SK-N-SH (cell line): ENCODE measurements at regions of chr2 and their contacts with region 1.

Region 1: DNA sequence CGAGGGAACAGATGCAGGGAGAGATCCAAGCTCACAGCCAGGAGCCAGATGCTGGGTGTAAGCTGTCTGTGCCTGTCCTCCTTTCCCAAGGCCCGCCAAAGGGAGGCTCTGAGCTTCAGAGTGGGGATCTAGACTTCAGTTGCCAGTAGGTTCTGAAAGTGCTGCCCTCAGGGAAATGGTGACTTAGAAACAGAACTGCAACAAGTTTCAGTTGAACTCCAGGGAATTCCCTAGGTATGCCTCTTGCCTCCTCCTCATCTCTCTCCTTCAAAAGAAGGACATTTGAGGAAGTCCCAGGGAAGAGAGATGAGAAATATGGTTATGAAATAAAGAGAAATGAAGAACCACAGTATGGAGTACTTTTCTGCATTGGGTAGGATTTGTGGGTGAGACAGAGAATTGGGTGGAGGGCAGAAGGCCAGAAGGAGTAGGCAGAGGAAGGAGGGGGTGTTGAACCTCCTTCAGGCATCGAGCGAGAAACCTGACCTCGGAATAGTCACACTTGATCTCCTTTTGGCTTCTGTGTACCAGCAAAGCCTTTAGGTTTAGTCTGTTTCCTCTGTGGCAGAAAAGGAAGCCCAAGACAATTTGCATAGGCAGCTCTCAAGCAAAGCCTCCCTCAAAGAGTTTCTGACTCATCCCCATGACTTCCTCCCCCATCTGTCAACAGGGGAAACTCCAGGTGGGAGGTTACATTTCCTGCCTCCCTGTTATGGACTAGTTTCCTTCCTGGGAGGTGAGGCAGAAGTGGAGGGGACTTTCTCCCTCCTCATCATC is 45.7 kb downstream of the QPCT start:
- DNase-seq: no peak
- H3K4me3 ChIP-seq: no peak overlapping the region
- H3K27ac ChIP-seq: peak overlapping the region in 1 of 2 experiments; percentile 68; a peak in 2 of 4 replicates
- H3K4me1 ChIP-seq: peaks cover 6 to 32% of the 10 kb centered on the region in 2 experiments; a peak in 3 of 4 replicates
- H3K27me3 ChIP-seq: no peaks in the 10 kb centered on the region
- CTCF ChIP-seq: no peak
- EP300 ChIP-seq: peak in 1 of 2 experiments; percentile 62; a peak in 1 of 4 replicates
- RAD21 ChIP-seq: no peak

Region 2: DNA sequence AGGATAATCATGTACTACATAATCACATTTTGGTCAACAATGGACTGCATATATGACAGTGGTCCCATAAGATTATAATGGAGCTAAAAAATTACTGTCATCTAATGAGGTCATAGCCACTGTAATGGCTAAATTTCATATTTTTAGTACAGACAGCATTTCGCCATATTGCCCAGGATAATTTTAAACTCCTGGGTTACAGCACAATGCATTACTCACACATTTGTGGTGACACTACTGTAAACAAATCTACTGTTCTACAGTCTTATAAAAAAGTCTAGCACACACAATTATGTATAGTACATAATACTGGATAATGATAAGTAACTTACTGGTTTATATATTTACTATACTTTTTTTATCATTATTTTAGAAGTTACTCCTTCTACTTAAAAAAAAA is 246.2 kb before region 1 on chr2:
- CTCF ChIA-PET with region 1: no interaction called
- POLR2A ChIA-PET with region 1: no interaction called
- DNase-seq: no peak
- H3K4me3 ChIP-seq: no peak overlapping the region
- H3K27ac ChIP-seq: no peak overlapping the region
- H3K4me1 ChIP-seq: no peaks in the 10 kb centered on the region
- H3K27me3 ChIP-seq: no peaks in the 10 kb centered on the region
- CTCF ChIP-seq: no peak
- EP300 ChIP-seq: no peak
- RAD21 ChIP-seq: no peak

Region 3: DNA sequence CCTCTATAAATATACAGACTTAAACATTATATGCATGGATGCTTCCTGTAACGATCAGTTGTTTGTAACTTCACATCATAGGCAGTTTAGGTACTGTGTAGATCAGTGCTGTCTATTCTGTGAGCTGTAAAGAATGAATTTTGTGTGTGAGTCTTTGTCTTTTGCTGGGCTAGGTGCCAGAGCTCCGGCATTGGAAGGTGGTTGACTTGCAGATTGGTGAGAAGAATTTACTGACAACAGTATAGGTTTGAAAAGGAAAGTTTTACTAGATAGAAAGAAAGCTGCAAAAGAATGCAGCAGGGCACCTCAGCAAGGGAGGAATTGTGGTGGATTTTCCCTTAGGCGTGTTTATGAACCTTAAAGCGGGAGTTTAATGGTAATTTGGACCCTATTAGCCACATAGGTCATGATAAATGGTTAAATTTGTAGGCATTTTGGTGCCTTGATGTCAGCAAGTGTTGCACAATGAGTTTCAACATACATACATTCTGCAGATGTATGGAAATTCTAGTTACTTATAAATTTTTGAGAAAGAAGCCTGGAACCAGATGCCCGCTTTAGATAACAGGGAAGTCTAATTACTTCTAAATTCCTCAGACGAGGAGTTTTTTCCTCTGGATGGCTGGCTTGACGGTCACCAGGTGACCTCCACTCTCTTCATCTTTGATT is 52.4 kb before region 1 on chr2:
- CTCF ChIA-PET with region 1: interaction called, 16 read pairs
- POLR2A ChIA-PET with region 1: no interaction called
- DNase-seq: no peak
- H3K4me3 ChIP-seq: no peak overlapping the region
- H3K27ac ChIP-seq: no peak overlapping the region
- H3K4me1 ChIP-seq: peaks cover 0 to 10% of the 10 kb centered on the region in 2 experiments; a peak in 2 of 4 replicates
- H3K27me3 ChIP-seq: no peaks in the 10 kb centered on the region
- CTCF ChIP-seq: no peak
- EP300 ChIP-seq: no peak
- RAD21 ChIP-seq: no peak

Region 4: GRCh38 chr2:37402636-37403035 is 12.5 kb after region 1 on chr2:
- CTCF ChIA-PET with region 1: interaction called, 174 read pairs
- POLR2A ChIA-PET with region 1: no interaction called
- DNase-seq: no peak
- H3K4me3 ChIP-seq: no peak overlapping the region
- H3K27ac ChIP-seq: no peak overlapping the region
- H3K4me1 ChIP-seq: no peaks in the 10 kb centered on the region
- H3K27me3 ChIP-seq: no peaks in the 10 kb centered on the region
- CTCF ChIP-seq: no peak
- EP300 ChIP-seq: no peak
- RAD21 ChIP-seq: no peak

Region 5: GRCh38 chr2:37472959-37473358 is 82.8 kb after region 1 on chr2:
- CTCF ChIA-PET with region 1: no interaction called
- POLR2A ChIA-PET with region 1: no interaction called
- DNase-seq: no peak
- H3K4me3 ChIP-seq: no peak overlapping the region
- H3K27ac ChIP-seq: peak overlapping the region in 1 of 2 experiments; percentile 71; a peak in 2 of 4 replicates
- H3K4me1 ChIP-seq: peaks cover 0 to 28% of the 10 kb centered on the region in 2 experiments; a peak in 3 of 4 replicates
- H3K27me3 ChIP-seq: no peaks in the 10 kb centered on the region
- CTCF ChIP-seq: no peak; the same call in 1 of the 2 replicates
- EP300 ChIP-seq: no peak
- RAD21 ChIP-seq: no peak

Region 6: DNA sequence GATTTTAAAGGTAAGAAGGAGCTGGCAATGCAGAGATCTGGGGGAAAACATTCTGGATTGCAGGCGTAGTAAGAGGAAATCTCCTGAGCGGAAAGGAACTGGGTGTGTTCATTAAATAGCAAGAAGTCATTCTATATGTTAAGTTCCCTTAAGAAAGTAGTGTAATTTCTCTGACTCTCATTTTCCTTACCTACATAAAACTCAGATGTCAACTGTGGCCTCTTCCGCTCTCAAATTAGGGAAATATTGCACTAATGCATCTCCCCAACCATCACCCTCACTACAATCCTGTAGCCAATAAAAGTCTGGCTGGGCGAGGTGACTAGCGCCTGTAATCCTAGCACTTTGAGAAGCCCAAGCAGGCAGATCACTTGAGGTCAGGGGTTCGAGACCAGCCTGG is 370.3 kb after region 1 on chr2:
- CTCF ChIA-PET with region 1: no interaction called
- POLR2A ChIA-PET with region 1: no interaction called
- DNase-seq: no peak
- H3K4me3 ChIP-seq: no peak overlapping the region
- H3K27ac ChIP-seq: no peak overlapping the region
- H3K4me1 ChIP-seq: peaks cover 0 to 12% of the 10 kb centered on the region in 2 experiments; a peak in 2 of 4 replicates
- H3K27me3 ChIP-seq: no peaks in the 10 kb centered on the region
- CTCF ChIP-seq: no peak
- EP300 ChIP-seq: no peak
- RAD21 ChIP-seq: no peak

Region 7: DNA sequence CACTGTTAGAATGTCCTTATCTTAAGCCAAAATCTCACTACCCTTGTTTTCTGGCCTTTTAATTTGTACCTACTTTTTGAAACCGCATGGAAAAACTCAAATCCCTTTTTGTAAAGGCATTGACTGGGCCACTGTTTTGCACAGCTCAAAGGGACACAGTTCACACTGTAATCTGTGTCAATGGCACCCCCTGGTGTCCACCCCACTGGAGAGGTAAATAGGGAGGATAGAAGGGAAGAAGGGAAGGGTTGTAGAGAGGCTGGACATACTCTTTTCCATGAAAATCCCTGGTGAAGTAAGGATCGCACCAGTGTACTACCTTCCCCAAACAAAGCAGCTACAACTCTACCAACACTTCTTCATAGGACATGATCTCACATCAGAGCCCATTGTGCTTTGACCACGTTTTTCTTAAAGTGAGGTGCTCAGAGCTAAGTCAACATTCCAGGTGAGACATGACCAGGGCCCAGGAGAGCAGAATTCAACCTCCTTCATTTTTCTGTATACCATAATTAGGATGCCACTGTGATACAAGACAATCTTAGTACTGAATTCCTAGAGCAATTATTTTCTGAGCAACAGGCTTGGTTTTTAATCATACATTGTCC is 442.5 kb after region 1 on chr2:
- CTCF ChIA-PET with region 1: interaction called, 116 read pairs
- POLR2A ChIA-PET with region 1: no interaction called
- DNase-seq: peak; percentile 81
- H3K4me3 ChIP-seq: no peak overlapping the region
- H3K27ac ChIP-seq: peak overlapping the region in 1 of 2 experiments; percentile 53; a peak in 2 of 4 replicates
- H3K4me1 ChIP-seq: peaks cover 14 to 21% of the 10 kb centered on the region in 2 experiments
- H3K27me3 ChIP-seq: no peaks in the 10 kb centered on the region
- CTCF ChIP-seq: peak; percentile 97
- EP300 ChIP-seq: peak in 1 of 2 experiments; percentile 18; a peak in 1 of 4 replicates
- RAD21 ChIP-seq: peak; percentile 99

Region 8: GRCh38 chr2:37890893-37891495 is 500.8 kb after region 1 on chr2:
- CTCF ChIA-PET with region 1: interaction called, 546 read pairs
- POLR2A ChIA-PET with region 1: no interaction called
- DNase-seq: peak; percentile 85
- H3K4me3 ChIP-seq: no peak overlapping the region
- H3K27ac ChIP-seq: no peak overlapping the region; a peak in 1 of 4 replicates
- H3K4me1 ChIP-seq: peaks cover 6 to 8% of the 10 kb centered on the region in 2 experiments; a peak in 3 of 4 replicates
- H3K27me3 ChIP-seq: no peaks in the 10 kb centered on the region
- CTCF ChIP-seq: peak; percentile 95
- EP300 ChIP-seq: no peak
- RAD21 ChIP-seq: peak; percentile 95

Region 9: DNA sequence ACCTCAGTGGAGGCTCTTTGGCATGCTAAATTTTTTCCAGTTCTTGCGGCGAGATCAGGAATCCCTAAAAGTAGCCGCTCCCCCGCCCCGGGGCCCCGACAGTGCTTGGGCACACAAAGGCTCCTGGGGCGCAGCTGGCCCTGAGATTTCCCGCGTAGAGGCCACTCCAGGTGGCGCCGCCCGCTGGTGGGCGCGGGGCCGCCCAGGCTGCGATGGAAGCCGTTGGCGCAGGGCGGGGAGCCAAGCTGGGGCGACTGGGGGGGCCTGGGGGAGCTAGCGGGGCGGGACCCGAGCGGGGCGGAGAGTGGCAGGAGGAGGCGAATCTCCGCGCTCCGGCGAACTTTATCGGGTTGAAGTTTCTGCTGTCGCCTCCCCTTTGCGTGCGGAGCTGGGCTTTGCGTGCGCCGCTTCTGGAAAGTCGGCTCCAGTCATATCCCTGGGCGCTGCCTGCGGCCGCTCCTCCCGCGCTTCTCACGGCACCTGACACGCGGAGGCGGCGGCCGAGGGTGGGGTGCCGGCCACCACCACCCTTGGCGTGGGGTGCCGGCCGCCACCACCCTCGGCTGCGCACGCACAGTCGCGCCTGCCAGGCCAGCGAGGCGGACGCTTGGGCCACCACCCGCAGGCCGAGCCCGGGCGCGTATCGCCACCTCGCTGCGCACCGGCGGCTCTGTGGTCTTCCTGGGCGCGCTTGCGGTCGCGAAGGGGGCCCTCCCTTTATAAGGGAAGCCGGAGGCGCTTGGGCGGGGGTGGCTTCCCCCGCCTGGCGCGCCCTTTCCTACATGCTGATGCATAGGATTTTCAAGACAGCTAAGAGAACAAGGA is 686.6 kb after region 1 on chr2:
- CTCF ChIA-PET with region 1: interaction called, 19 read pairs
- POLR2A ChIA-PET with region 1: no interaction called
- DNase-seq: peak; percentile 98
- H3K4me3 ChIP-seq: peak overlapping the region; percentile 68 to 70
- H3K27ac ChIP-seq: peak overlapping the region in 1 of 2 experiments; percentile 88; a peak in 2 of 4 replicates
- H3K4me1 ChIP-seq: peaks cover 0 to 13% of the 10 kb centered on the region in 2 experiments; a peak in 1 of 4 replicates
- H3K27me3 ChIP-seq: no peaks in the 10 kb centered on the region; the same call in 1 of the 2 replicates
- CTCF ChIP-seq: peak; percentile 66
- EP300 ChIP-seq: 0 out of 4 replicates have a peak, but pooled peaks of 1 of the 2 experiments have one; percentile 3
- RAD21 ChIP-seq: no peak